Psoas muscle (tissue), 8 donors: ENCODE measurements at regions of chr11 and their contacts with region 1.

Region 1: GRCh38 chr11:12664385-12664784 is 9.8 kb upstream of the TEAD1 start:
- DNase-seq: no peak
- ATAC-seq: no peak
- H3K4me3 ChIP-seq: no peak overlapping the region
- H3K27ac ChIP-seq: no peak overlapping the region
- H3K4me1 ChIP-seq: no peaks in the 10 kb centered on the region
- H3K27me3 ChIP-seq: no peaks in the 10 kb centered on the region
- CTCF ChIP-seq: no peak

Region 2: DNA sequence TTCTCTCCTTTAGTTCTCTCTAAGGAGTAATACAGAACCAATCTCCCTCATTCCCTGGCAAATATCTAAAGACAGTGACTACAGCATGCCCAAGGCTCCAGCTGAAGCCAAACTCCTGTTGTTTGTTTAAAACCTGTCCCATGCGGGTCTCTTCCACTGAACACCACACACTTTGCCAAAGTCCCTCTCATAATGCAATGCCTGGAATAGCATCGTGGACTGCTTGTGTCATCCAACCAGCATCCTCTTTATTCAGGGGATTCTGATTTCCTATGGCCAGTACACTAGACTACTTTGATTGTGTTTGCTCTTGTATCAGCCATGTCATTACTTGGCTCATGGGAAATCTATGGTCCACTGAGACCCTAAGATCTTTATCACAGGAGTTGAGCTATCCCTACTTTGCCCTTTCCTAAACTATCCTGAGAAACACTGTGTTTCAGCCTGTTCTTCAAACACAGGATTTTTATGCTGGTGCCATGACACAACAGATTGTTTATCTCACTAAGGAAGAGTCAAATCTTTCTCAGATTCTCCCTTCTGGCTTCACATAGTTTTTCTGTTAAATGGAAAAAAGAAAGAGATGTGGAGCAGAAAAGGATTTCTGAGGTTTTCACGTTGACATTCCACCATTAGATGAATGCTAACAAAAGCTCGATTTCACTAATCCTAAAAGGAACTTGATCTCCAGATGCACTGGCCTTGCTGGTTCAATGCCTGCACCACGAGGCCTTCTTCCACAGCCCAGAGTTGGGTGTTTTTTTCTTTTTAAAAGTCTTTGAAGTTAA is 1954.9 kb before region 1 on chr11:
- intact Hi-C with region 1: loop called in 1 of 2 experiments (anchors 5 kb)
- DNase-seq: no peak
- ATAC-seq: no peak
- H3K4me3 ChIP-seq: no peak overlapping the region
- H3K27ac ChIP-seq: no peak overlapping the region
- H3K4me1 ChIP-seq: no peaks in the 10 kb centered on the region
- H3K27me3 ChIP-seq: no peaks in the 10 kb centered on the region
- CTCF ChIP-seq: no peak